WTC11 (cell line): ENCODE measurements at regions of chr22 and their contacts with region 1.

Region 1: DNA sequence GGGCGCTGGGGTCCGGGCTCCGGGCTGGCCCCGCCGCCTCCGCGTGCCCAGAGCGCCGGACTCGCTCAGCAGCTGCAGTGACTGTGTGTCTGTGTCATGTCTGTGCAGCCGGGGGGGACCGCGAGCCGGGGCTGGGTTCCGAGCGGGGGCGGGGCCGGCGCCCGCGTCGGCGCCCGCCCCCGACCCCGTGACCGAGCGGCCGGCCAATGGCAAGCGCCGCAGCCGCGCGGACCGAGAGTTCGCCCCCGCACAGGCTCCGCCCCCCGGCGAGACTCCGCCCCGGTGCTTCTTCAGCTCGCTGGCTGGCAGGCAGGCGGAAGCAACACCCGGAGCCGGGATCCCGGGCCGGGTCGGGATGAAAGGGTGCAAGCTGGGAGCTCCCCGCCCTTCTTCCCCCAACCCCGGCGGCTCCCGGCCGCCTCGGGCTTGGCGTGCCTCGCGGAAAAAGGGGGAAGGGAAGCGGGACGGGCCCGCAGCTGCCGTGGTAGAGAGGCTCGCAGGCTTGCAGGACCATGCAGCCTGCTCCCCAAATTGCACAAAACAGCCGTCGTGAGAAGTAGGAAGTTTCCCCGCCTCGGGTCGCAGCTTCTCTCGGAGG is 750 bp upstream of the LARGE1 start:
- DNase-seq: peak; percentile 100
- ATAC-seq: peak; percentile 77
- H3K4me3 Mint-ChIP-seq: peak overlapping the region; percentile 93
- H3K27ac Mint-ChIP-seq: no peak overlapping the region
- H3K4me1 Mint-ChIP-seq: peaks cover 61% of the 10 kb centered on the region
- H3K27me3 Mint-ChIP-seq: peaks cover 8% of the 10 kb centered on the region
- CTCF ChIP-seq: no peak

Region 2: DNA sequence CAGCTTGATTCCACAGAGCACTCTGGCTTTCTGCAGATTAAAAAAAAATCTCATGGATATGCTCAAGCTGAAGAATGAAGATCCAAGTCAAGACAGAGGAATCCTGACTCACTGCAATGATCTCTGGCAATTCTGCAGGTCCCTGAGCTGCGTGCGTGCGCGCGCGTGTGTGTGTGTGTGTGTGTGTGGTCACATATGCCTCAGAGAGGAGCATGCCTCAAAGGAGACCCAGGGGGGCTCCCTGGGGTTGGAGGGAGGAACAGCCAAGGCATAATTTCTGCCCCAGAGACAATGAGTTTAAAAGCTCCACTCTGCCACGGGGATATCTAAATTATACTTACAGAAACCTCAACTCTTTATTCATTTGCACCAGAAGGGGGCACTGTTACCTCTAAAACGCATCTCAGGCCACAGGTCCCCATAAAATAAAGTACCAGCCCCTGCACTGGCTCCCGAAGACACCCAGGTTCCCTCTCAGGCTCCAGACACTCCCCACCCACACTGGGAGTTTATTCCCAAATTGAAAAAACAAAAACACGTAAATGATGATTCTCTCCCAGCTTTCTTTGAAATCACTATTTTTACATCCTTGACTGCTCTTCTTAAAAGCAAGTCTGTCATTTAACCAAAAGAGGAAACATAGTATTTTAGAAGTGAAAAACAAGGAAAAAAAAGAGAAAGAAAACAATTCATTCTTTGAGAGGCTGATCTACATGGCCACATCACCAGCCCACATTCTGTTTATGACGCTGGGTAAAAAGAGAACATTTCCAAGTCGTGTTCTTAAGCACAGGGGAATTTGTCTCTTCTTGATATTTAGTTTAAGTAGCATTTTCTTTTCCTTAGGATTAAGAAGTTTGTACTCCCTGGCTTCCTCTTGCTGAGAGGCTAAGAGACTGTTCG is 401.7 kb before region 1 on chr22:
- CTCF ChIA-PET with region 1: interaction called, 12 read pairs
- POLR2A ChIA-PET with region 1: no interaction called
- DNase-seq: peak; percentile 30
- ATAC-seq: peak; percentile 82
- H3K4me3 Mint-ChIP-seq: no peak overlapping the region
- H3K27ac Mint-ChIP-seq: peak overlapping the region; percentile 14; the same call in 1 of the 2 replicates
- H3K4me1 Mint-ChIP-seq: peaks cover 13% of the 10 kb centered on the region
- H3K27me3 Mint-ChIP-seq: no peaks in the 10 kb centered on the region
- CTCF ChIP-seq: peak; percentile 56

Region 3: DNA sequence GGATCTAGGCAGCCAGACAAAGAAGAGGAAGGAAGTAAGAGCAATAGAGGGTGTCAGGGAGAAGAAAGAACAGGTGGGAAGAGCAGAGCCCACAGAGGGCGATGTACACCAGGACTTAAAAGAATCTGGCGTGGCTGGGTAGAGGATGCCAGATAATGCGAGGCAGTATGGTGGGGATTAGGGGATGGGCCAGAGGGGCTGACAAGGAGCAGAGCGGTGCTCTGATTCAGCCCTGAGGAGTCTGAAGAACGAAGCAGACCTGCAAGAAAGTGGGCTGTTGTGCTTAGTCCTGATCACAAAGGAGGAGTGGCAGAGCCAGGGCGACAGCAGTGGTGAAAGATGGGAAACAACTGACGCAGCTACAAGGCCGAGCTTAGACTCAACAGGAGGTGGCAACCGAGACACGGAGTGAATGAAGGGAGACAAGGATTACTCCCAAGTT is 164.5 kb before region 1 on chr22:
- CTCF ChIA-PET with region 1: interaction called, 10 read pairs
- POLR2A ChIA-PET with region 1: no interaction called
- DNase-seq: peak; percentile 39
- ATAC-seq: peak; percentile 90
- H3K4me3 Mint-ChIP-seq: no peak overlapping the region
- H3K27ac Mint-ChIP-seq: peak overlapping the region; percentile 84
- H3K4me1 Mint-ChIP-seq: peaks cover 41% of the 10 kb centered on the region
- H3K27me3 Mint-ChIP-seq: no peaks in the 10 kb centered on the region
- CTCF ChIP-seq: no peak

Region 4: GRCh38 chr22:33896575-33897447 is 24.2 kb before region 1 on chr22:
- CTCF ChIA-PET with region 1: interaction called, 12 read pairs
- POLR2A ChIA-PET with region 1: interaction called, 13 read pairs
- DNase-seq: no peak
- ATAC-seq: peak; percentile 85
- H3K4me3 Mint-ChIP-seq: peak overlapping the region; percentile 53
- H3K27ac Mint-ChIP-seq: peak overlapping the region; percentile 99
- H3K4me1 Mint-ChIP-seq: peaks cover 96% of the 10 kb centered on the region
- H3K27me3 Mint-ChIP-seq: no peaks in the 10 kb centered on the region
- CTCF ChIP-seq: no peak

Region 5: GRCh38 chr22:34055525-34056200 is 134.6 kb after region 1 on chr22:
- CTCF ChIA-PET with region 1: interaction called, 10 read pairs
- POLR2A ChIA-PET with region 1: no interaction called
- DNase-seq: peak; percentile 70
- ATAC-seq: peak; percentile 92
- H3K4me3 Mint-ChIP-seq: no peak overlapping the region
- H3K27ac Mint-ChIP-seq: no peak overlapping the region
- H3K4me1 Mint-ChIP-seq: peaks cover 3% of the 10 kb centered on the region; the same call in 1 of the 2 replicates
- H3K27me3 Mint-ChIP-seq: peaks cover 6% of the 10 kb centered on the region
- CTCF ChIP-seq: no peak

Region 6: DNA sequence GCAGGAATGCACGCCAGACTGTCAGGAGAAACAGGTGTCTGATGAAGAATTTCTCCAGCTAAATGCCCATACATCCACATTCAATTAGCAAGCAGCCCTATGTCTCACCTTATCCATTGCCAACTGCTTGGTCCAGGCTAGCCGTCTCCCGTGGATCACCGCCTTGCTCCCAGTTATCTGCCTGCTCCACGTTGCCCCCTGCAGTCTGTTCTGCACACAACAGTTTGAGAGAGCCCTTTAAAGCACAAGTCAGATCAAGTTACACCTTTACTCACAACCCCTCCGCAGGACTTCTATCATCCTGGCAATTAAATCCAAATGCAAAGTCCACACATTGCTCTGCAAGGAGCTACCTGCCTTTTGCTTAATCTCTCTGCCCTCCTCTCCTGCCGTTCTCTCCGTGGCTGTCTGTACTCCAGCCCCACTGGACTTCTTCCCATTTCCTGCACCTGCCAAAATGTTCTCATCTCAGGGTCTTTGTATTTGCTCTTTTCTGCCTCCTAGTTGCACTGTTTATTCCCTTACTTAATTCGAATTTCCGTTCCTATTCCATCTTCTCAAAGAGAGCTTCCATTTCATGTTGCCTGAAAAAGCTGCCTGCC is 184.5 kb after region 1 on chr22:
- CTCF ChIA-PET with region 1: interaction called, 43 read pairs
- POLR2A ChIA-PET with region 1: no interaction called
- DNase-seq: peak; percentile 88
- ATAC-seq: peak; percentile 96
- H3K4me3 Mint-ChIP-seq: peak overlapping the region; percentile 52
- H3K27ac Mint-ChIP-seq: no peak overlapping the region
- H3K4me1 Mint-ChIP-seq: peaks cover 6% of the 10 kb centered on the region
- H3K27me3 Mint-ChIP-seq: peaks cover 10% of the 10 kb centered on the region; the same call in 1 of the 2 replicates
- CTCF ChIP-seq: peak; percentile 48

Region 7: DNA sequence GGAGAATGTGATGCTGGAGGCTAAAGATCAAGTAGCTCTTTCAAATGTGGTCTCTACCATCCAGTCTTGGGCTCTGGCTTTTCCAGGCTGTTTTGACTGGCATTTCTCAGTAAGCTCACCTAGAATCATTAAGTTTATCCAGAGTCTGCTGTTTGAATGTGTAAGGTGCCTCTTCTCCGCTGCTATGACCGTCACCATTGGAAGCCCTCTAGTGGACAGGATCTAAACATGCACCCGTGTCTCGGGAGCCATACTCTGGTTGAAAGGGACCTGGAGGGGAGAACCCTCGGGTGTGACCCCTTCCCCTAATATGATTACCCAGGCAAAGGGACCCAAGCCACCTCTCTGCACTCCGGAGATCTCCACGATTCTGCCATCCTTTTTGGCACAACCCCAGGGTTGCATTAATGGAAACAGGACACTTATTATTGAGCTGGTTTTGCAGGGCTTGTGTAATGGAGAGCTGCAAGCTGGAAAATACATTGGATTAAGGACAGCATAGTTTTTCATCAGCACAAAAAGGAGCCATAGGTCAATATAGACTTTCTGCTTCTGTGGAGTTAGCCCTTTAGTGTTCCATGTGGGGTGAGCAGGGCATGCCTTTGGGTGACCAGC is 190.3 kb after region 1 on chr22:
- CTCF ChIA-PET with region 1: interaction called, 43 read pairs
- POLR2A ChIA-PET with region 1: no interaction called
- DNase-seq: peak; percentile 49
- ATAC-seq: peak; percentile 95
- H3K4me3 Mint-ChIP-seq: no peak overlapping the region
- H3K27ac Mint-ChIP-seq: no peak overlapping the region
- H3K4me1 Mint-ChIP-seq: peaks cover 3% of the 10 kb centered on the region
- H3K27me3 Mint-ChIP-seq: peaks cover 6% of the 10 kb centered on the region; the same call in 1 of the 2 replicates
- CTCF ChIP-seq: peak; percentile 77